ENCODE measurements at regions of chr13 and their contacts with region 1.

Region 1: GRCh38 chr13:51452361-51453206 is at the start of gene INTS6:
- DNase-seq: peak; percentile 99
- H3K4me3 Mint-ChIP-seq: peak within 1 kb of the TSS; percentile 94
- H3K27ac Mint-ChIP-seq: peak within 1 kb of the TSS; percentile 99
- H3K4me1 Mint-ChIP-seq: peaks cover 35% of the 10 kb centered on the region
- H3K27me3 Mint-ChIP-seq: no peaks in the 10 kb centered on the region
- total RNA-seq, gene INTS6: 40.4 to 41.0 TPM

Region 2: DNA sequence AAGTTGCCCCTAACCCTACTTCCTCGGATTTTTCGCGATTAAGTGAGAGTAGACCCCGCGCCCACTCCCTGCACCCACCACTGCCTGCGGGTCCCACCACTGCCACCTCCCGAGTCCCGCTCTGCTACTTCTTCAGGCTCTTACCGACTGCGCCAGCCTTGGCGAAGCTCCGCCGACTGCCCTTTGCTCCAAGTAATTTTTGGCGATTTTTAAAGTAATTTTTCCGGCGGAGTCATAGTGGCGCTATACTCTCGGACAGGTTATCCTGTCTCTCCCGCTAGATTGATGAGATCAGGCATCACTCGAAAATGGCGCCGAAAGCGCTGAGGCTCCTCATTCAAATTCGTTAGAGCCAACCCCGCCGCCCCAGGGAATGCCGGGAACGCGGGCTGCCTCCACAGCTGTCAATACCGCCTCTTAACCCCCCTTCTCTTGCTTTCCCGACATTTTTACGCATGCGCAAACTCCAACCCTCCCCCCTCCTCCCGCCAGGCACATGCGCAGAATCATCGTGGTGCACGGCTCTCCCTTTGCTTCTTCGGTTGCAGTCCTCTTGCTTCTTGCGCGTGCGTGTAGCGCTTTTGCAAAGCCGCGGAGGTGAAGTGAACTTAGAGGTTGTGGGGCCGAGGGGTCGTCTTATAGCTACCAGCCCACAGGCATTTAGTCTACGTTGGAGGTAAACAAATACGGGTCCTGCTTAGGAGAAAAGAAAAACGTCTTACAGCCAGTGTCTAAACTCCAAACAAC is 1370.7 kb before region 1 on chr13:
- CTCF ChIA-PET with region 1: no interaction called
- intact Hi-C with region 1: loop called (anchors 1 kb)
- DNase-seq: peak; percentile 99
- H3K4me3 Mint-ChIP-seq: peak overlapping the region; percentile 100
- H3K27ac Mint-ChIP-seq: peak overlapping the region; percentile 100
- H3K4me1 Mint-ChIP-seq: peaks cover 27% of the 10 kb centered on the region
- H3K27me3 Mint-ChIP-seq: peaks cover 15% of the 10 kb centered on the region

Region 3: DNA sequence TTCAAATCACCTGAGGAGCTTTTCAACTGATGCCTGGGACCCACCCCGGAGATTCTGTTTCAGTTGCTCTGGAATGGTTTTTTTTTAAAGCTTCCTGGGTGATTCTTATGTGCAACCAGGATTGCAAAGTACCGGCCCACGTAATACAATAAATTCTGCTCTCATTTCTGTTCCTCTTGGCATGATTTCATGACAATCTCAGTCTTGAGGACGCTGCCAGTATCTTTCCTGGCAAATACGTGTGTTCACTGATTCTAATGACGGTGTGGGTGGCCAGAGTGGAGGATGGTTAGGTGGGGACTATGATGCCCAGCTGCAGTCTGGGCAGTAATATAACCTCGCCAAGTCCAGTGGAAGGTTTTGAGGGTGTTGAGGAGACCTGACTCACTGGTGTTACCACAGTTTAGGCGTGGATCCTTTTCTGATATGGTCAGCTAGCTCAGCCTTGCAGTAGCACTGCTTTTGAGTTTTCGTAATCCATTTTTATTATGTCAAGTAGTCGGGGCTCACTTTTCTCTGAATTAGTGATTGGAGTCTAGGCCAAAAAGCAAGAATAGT is 181.0 kb before region 1 on chr13:
- CTCF ChIA-PET with region 1: no interaction called
- intact Hi-C with region 1: no loop called
- DNase-seq: no peak
- H3K4me3 Mint-ChIP-seq: no peak overlapping the region
- H3K27ac Mint-ChIP-seq: no peak overlapping the region
- H3K4me1 Mint-ChIP-seq: no peaks in the 10 kb centered on the region
- H3K27me3 Mint-ChIP-seq: no peaks in the 10 kb centered on the region

Region 4: GRCh38 chr13:51502153-51502651 is 49.6 kb after region 1 on chr13:
- CTCF ChIA-PET with region 1: no interaction called
- intact Hi-C with region 1: loop called (anchors 1 kb)
- DNase-seq: peak; percentile 66
- H3K4me3 Mint-ChIP-seq: no peak overlapping the region
- H3K27ac Mint-ChIP-seq: no peak overlapping the region
- H3K4me1 Mint-ChIP-seq: peaks cover 23% of the 10 kb centered on the region
- H3K27me3 Mint-ChIP-seq: no peaks in the 10 kb centered on the region

Region 5: GRCh38 chr13:51645154-51645650 is 192.6 kb after region 1 on chr13:
- CTCF ChIA-PET with region 1: no interaction called
- intact Hi-C with region 1: loop called (anchors 1 kb)
- DNase-seq: peak; percentile 22
- H3K4me3 Mint-ChIP-seq: peak overlapping the region; percentile 30
- H3K27ac Mint-ChIP-seq: peak overlapping the region; percentile 39
- H3K4me1 Mint-ChIP-seq: peaks cover 40% of the 10 kb centered on the region
- H3K27me3 Mint-ChIP-seq: no peaks in the 10 kb centered on the region

Region 6: GRCh38 chr13:51803422-51804294 is 351.1 kb after region 1 on chr13 and contains the start of gene DHRS12:
- CTCF ChIA-PET with region 1: interaction called, 13 read pairs
- intact Hi-C with region 1: loop called (anchors 1 kb)
- DNase-seq: peak; percentile 89
- H3K4me3 Mint-ChIP-seq: peak within 1 kb of the TSS; percentile 92
- H3K27ac Mint-ChIP-seq: peak within 1 kb of the TSS; percentile 98
- H3K4me1 Mint-ChIP-seq: peaks cover 57% of the 10 kb centered on the region
- H3K27me3 Mint-ChIP-seq: no peaks in the 10 kb centered on the region
- total RNA-seq, gene DHRS12: 4.1 to 4.9 TPM

Region 7: DNA sequence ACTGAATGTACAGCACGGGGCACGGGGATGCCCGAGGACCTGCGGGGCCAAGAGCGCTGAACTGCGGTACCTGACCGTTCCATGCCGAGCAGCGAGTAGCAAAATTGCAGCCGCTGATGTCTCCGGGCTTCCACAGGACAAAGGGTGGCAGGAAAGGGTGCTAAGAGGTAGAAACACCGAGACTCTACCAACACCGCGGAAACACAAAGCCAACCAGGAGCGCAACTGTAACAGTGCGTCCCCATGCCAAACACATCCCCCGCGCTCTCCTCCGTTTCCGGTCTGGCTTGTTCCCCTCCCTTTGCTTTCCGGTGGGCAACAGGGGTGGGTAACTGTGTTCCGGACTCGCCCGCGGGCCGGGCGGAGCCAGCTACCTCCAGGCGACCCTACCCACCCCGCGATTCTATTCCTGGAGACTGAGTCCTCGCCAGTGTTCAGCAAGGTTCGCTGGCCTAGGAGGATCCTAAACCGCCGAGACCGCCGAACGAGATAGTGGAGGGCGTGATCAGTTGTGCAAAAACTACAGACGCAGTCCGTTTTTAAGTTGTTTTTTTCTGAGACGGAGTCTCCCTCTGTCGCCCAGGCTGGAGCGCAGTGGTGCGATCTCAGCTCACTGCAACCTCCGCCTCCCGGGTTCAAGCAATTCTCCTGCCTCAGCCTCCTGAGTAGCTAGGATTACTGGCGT is 741.7 kb after region 1 on chr13:
- CTCF ChIA-PET with region 1: no interaction called
- intact Hi-C with region 1: loop called (anchors 5 kb)
- DNase-seq: peak; percentile 90
- H3K4me3 Mint-ChIP-seq: peak overlapping the region; percentile 98
- H3K27ac Mint-ChIP-seq: peak overlapping the region; percentile 97
- H3K4me1 Mint-ChIP-seq: peaks cover 30% of the 10 kb centered on the region
- H3K27me3 Mint-ChIP-seq: no peaks in the 10 kb centered on the region

Measured in activated naive CD4-positive, alpha-beta T cell treated with anti-CD3 and anti-CD28 coated beads for 36 hours (primary cell).